Gastrocnemius medialis (tissue), 4 donors: ENCODE measurements at regions of chr1 and their contacts with region 1.

Region 1: GRCh38 chr1:201042779-201043461 is 19.4 kb upstream of the KIF21B start:
- DNase-seq: peak; percentile 38 to 52
- ATAC-seq: peak; percentile 77 to 85
- H3K4me3 ChIP-seq: no peak overlapping the region
- H3K27ac ChIP-seq: peak overlapping the region; percentile 11 to 44 (median 33)
- H3K4me1 ChIP-seq: peaks cover 0 to 6% of the 10 kb centered on the region in 2 donors
- H3K27me3 ChIP-seq: no peaks in the 10 kb centered on the region
- CTCF ChIP-seq: peak; percentile 73 to 86 (median 82)
- POLR2A ChIP-seq: no peak

Region 2: DNA sequence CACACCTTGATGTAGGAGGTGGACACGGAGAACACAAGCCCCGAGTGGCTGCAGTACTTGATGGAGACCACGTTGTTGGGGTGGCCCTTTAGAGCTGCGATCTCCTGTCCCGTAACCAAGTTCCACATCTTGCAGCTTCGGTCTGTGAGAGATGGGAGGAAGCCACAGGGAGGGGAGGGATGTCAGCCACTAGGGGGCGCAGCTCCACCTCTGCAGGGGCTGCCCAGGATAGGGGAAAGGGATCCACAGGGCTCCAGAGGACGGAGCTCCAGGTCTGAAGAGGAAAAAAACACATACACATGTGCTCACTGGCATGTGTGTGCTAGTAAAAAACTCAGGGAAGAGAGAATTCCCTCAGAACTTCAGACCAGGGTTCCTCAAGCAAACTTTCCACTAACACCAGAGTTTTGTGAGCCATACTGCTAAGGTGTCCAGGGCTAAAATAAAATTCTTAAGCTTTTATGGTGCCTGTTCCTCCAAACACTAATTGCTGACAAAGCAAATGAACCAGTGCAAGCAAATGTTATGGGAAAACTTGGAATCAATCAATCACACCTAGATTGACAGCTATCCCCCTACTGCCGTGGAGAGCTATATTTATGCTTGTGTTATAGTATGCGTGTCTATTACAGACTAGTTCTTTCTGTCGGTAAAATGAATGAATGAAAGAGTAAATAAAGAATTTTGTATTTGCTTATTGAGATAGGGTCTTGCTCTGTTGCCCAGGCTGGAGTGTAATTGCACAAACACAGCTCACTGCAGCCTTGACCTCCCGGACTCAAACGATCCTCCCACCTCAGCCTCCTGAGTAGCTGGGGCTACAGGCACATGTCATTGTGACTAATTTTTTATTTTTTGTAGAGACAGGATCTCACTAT is 63.1 kb before region 1 on chr1:
- in situ Hi-C with region 1: loop called in 3 of 4 experiments (anchors 5 kb)
- intact Hi-C with region 1: no loop called
- DNase-seq: no peak
- ATAC-seq: no peak
- H3K4me3 ChIP-seq: no peak overlapping the region
- H3K27ac ChIP-seq: no peak overlapping the region
- H3K4me1 ChIP-seq: no peaks in the 10 kb centered on the region
- H3K27me3 ChIP-seq: no peaks in the 10 kb centered on the region
- CTCF ChIP-seq: peak in 3 of 5 experiments; percentile 18 to 49 (median 25)
- POLR2A ChIP-seq: no peak